ENCODE measurements at regions of chr7 and their contacts with region 1.

Region 1: DNA sequence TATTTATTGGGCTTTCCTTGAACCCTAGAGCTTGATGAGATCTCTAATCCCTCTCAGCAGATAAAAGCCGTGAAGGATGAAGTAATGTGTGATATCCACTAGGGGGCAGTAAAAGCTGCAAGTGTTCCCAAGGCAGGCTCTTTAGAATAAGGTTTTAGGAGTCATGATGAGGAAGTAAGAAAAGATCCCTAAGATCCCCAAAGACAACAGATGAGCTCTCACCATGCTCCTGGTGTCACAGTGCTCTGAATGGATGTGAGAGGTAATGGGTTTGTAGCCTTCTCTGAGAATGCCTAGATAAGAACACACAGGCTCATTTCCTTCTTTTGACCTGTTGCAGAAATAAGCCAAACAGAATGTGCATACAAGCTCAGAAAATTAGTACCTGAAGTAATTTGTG is 70.4 kb upstream of the ITPRID1 start:
- DNase-seq: peak; percentile 60 to 68
- ATAC-seq: peak; percentile 84 to 93
- H3K4me3 ChIP-seq: no peak overlapping the region
- H3K27ac ChIP-seq: no peak overlapping the region
- H3K4me1 ChIP-seq: no peaks in the 10 kb centered on the region
- CTCF ChIP-seq: peak; percentile 90
- EP300 ChIP-seq: no peak
- POLR2A ChIP-seq: no peak
- RAD21 ChIP-seq: peak; percentile 80 to 86

Region 2: DNA sequence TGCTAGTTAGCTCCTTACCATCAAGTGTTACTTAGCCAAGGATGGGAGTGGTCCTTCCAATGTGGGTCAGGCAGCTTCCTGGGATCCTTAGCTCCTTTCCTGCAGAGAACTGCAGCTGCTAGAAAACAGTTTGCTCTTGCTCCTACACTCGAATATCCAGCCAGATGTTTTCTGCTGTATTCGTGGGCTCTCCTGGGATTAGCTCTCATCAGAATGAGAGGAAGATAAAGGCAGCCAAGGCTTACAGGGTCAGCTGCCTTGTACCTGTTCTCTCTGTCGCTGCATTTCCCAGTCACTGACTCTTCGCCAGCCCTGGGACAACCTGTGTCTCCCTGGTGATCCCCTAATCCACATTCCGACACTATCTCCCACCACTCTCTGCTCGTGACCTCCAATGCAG is 131.9 kb before region 1 on chr7:
- CTCF ChIA-PET with region 1: no interaction called
- POLR2A ChIA-PET with region 1: no interaction called
- DNase-seq: no peak
- ATAC-seq: no peak
- H3K4me3 ChIP-seq: no peak overlapping the region
- H3K27ac ChIP-seq: no peak overlapping the region
- H3K4me1 ChIP-seq: no peaks in the 10 kb centered on the region
- CTCF ChIP-seq: no peak
- EP300 ChIP-seq: no peak
- POLR2A ChIP-seq: no peak
- RAD21 ChIP-seq: no peak

Region 3: GRCh38 chr7:31419505-31420055 is 23.9 kb before region 1 on chr7:
- CTCF ChIA-PET with region 1: interaction called, 36 read pairs
- POLR2A ChIA-PET with region 1: no interaction called
- DNase-seq: no peak
- ATAC-seq: no peak
- H3K4me3 ChIP-seq: no peak overlapping the region
- H3K27ac ChIP-seq: no peak overlapping the region
- H3K4me1 ChIP-seq: no peaks in the 10 kb centered on the region
- CTCF ChIP-seq: no peak
- EP300 ChIP-seq: no peak
- POLR2A ChIP-seq: no peak
- RAD21 ChIP-seq: no peak

Region 4: DNA sequence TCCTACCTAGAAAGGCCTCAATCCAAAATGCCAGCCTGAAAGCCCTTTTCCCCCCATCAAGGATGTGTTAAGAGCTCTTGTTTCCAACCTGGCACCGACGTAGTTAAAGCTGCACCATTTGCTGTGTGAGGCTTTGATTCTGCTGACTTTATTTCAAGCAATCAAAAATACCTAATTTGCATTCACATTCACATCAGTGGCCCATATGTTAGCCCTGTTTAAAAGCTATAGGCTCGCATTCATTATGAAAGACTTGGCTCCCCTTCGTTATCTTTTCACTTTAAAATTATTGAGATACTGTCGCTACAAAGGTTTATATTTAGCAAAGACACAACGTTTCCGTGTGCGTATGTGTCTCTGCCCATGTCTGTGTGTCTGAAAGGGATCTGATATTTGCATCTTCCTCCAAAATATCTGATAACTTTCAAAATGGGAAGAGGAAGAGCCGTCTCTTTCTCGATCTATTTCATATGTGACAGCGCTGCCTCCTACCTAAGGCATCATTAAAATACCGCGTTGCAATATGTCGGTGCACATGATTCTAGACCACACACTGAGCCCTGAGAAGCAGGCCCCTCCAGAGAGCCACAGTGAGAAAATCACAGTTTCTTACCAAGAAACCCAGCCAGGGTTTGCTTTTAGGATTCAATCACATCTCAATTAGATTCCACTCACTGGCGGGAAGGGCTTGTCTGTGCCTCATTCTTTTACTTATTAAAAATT is 13.3 kb after region 1 on chr7:
- CTCF ChIA-PET with region 1: interaction called, 41 read pairs
- POLR2A ChIA-PET with region 1: no interaction called
- DNase-seq: no peak
- ATAC-seq: no peak
- H3K4me3 ChIP-seq: no peak overlapping the region
- H3K27ac ChIP-seq: no peak overlapping the region
- H3K4me1 ChIP-seq: no peaks in the 10 kb centered on the region
- CTCF ChIP-seq: no peak
- EP300 ChIP-seq: no peak
- POLR2A ChIP-seq: no peak
- RAD21 ChIP-seq: no peak

Region 5: GRCh38 chr7:31478721-31479120 is 35.3 kb after region 1 on chr7:
- CTCF ChIA-PET with region 1: interaction called, 43 read pairs
- POLR2A ChIA-PET with region 1: no interaction called
- DNase-seq: no peak
- ATAC-seq: no peak
- H3K4me3 ChIP-seq: no peak overlapping the region
- H3K27ac ChIP-seq: no peak overlapping the region
- H3K4me1 ChIP-seq: no peaks in the 10 kb centered on the region
- CTCF ChIP-seq: no peak
- EP300 ChIP-seq: no peak
- POLR2A ChIP-seq: no peak
- RAD21 ChIP-seq: no peak

Region 6: DNA sequence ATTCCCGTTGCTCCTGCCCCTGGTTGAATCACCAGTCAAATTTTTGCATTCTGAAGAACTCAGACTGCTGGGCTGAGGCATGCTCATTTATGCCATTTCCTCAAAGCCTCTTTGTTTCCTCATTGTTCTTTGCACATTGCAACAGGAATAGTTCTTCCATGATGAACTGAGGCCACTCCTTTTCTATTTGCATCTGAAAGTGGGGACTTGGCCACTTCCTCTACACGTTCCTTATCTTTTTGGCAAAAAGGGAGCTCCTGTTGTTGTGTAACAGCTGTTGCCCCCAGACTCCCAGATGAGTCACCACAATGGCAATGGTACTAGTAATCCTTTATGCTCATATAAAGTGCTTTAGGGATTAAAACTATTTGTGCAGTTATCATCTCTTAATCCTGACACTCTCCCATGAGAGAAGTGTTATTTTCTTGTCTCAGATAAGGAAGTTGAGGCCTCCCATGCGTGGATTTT is 50.3 kb after region 1 on chr7:
- CTCF ChIA-PET with region 1: interaction called, 109 read pairs
- POLR2A ChIA-PET with region 1: no interaction called
- DNase-seq: no peak
- ATAC-seq: no peak
- H3K4me3 ChIP-seq: no peak overlapping the region
- H3K27ac ChIP-seq: no peak overlapping the region
- H3K4me1 ChIP-seq: no peaks in the 10 kb centered on the region
- CTCF ChIP-seq: no peak
- EP300 ChIP-seq: no peak
- POLR2A ChIP-seq: no peak
- RAD21 ChIP-seq: no peak

Region 7: GRCh38 chr7:31883761-31884164 is 440.3 kb after region 1 on chr7:
- CTCF ChIA-PET with region 1: no interaction called
- POLR2A ChIA-PET with region 1: no interaction called
- DNase-seq: peak in 1 of 2 experiments; percentile 49
- ATAC-seq: peak; percentile 56 to 59; a peak in 4 of 6 replicates
- H3K4me3 ChIP-seq: no peak overlapping the region
- H3K27ac ChIP-seq: peak overlapping the region; percentile 49 to 79
- H3K4me1 ChIP-seq: peaks cover 32% of the 10 kb centered on the region
- CTCF ChIP-seq: no peak
- EP300 ChIP-seq: no peak
- POLR2A ChIP-seq: no peak
- RAD21 ChIP-seq: no peak